ENCODE measurements at regions of chr4 and their contacts with region 1.

Region 1: GRCh38 chr4:187071946-187072600 is 348.4 kb upstream of the FAT1 start:
- DNase-seq: no peak
- H3K4me3 ChIP-seq: no peak overlapping the region
- H3K4me1 ChIP-seq: peaks cover 7% of the 10 kb centered on the region; the same call in 1 of the 2 replicates
- H3K27me3 ChIP-seq: peaks cover 37% of the 10 kb centered on the region

Region 2: GRCh38 chr4:186725469-186726425 is 346.3 kb before region 1 on chr4:
- in situ Hi-C with region 1: loop called (anchors 25 kb)
- DNase-seq: peak; percentile 77 to 86
- H3K4me3 ChIP-seq: peak overlapping the region; percentile 63
- H3K4me1 ChIP-seq: 0 out of 2 replicates have a peak, but pooled peaks cover 4% of the 10 kb centered on the region
- H3K27me3 ChIP-seq: no peaks in the 10 kb centered on the region

Measured in HAP-1 (cell line).